ENCODE measurements at regions of chr18 and their contacts with region 1.

Region 1: DNA sequence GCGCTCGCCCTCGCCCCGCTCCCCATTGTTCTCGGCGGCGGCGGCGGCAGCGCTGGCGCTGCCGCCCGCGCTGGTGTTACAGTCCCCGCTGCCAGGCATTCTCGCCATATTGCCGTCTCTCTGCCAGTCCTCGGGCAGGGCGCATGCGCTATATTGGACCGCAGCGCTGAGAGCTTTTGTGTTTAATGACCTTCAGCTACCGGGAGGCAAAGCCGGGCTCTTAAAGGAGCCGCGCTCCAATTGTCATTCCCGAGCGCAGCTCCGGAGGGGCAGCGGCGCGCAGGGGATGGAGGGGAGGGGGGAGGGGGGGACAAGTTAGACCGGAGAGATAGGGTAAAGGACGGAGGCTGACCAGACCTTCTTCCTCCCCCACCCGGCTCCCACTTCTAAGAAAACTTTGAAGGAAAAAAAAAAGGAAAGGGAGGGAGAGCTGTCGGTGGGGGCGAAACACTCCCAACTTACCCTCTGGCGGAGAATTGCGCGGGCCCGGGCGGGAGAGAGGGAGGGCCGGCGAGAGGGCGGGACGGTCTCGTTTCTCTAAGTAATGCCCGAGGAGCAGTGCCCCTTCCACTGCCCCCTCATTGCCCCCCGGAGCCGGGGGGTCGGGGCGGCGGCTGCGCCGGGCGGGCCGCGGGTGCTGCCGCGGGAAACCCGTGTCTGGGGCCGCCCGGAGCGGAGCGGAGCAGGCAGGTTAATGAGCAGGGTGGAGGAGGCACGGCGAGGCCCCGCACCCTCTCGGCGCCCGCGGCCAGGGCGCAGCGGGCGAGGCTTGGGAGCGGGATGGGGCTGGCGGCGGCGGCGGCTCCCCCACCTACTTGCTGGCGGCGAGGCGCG is at the start of gene KCTD1:
- DNase-seq: peak; percentile 73 to 83
- ATAC-seq: peak; percentile 86 to 87
- H3K4me3 ChIP-seq: peak within 1 kb of the TSS; percentile 69 to 83 (median 78)
- H3K27ac ChIP-seq: peak within 1 kb of the TSS; percentile 75 to 85 (median 82)
- H3K4me1 ChIP-seq: peaks cover 36 to 50% of the 10 kb centered on the region in 2 donors
- H3K27me3 ChIP-seq: peaks cover 6 to 28% (median 19%) of the 10 kb centered on the region in 3 donors
- CTCF ChIP-seq: no peak
- POLR2A ChIP-seq: peak in 1 of 2 donors; percentile 11
- total RNA-seq, gene KCTD1: 4.7 to 6.0 (median 5.2) TPM

Region 2: DNA sequence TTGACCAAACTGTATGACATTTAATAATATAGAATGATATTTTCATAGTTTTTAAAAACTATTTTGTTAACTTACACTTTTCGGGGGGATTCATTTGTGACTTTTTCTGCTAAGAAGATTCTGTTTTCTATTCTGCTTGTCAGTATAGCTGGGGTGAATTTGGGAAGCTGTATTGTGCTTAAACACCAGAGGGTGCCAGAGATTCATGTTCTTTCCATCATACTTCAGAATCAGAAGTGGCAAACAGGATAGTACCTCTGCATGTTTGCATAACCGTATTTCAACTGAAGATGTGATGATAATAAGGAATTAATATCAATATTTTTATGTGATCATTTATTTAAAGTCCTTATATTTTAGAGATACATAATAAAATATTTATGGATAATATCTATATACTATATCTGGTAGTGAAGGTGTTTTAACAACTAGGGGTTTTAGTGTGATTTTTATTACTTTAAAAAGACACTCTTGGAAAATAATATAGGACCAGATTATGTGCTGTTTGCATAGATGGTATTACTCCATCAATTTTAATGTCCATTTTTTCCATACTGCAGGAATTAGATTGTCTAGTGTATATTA is 241.4 kb before region 1 on chr18:
- in situ Hi-C with region 1: no loop called
- intact Hi-C with region 1: no loop called
- DNase-seq: no peak
- ATAC-seq: peak in 1 of 2 donors; percentile 66
- H3K4me3 ChIP-seq: no peak overlapping the region
- H3K27ac ChIP-seq: no peak overlapping the region
- H3K4me1 ChIP-seq: no peaks in the 10 kb centered on the region
- H3K27me3 ChIP-seq: no peaks in the 10 kb centered on the region
- CTCF ChIP-seq: peak in 3 of 5 experiments; percentile 13 to 49 (median 35)
- POLR2A ChIP-seq: no peak

Region 3: DNA sequence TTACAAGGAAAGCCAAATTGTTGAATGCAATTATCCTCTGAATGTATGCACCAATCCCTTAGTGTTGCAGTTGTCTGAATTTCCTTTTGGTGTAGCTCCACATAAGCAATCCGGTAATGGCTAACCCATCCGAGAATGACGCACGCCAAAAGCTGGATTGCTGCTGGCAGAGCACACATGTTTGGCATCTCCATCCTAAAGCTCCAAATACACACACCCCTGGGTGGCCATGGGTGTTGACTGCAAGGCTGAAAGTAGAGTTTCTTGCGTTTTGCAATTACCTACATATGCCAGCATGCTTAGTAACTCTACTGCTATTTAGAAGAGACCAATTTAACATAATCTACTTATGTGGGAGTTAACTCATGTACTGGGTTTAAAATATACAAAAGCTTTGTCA is 53.4 kb before region 1 on chr18:
- in situ Hi-C with region 1: no loop called
- intact Hi-C with region 1: loop called (anchors 2 kb)
- DNase-seq: peak; percentile 38 to 66
- ATAC-seq: peak; percentile 45 to 62
- H3K4me3 ChIP-seq: no peak overlapping the region
- H3K27ac ChIP-seq: peak overlapping the region; percentile 25 to 85 (median 48)
- H3K4me1 ChIP-seq: peaks cover 10 to 24% of the 10 kb centered on the region in 2 donors
- H3K27me3 ChIP-seq: no peaks in the 10 kb centered on the region
- CTCF ChIP-seq: no peak
- POLR2A ChIP-seq: no peak